Natural killer cell (primary cell): ENCODE measurements at regions of chr17 and their contacts with region 1.

Region 1: DNA sequence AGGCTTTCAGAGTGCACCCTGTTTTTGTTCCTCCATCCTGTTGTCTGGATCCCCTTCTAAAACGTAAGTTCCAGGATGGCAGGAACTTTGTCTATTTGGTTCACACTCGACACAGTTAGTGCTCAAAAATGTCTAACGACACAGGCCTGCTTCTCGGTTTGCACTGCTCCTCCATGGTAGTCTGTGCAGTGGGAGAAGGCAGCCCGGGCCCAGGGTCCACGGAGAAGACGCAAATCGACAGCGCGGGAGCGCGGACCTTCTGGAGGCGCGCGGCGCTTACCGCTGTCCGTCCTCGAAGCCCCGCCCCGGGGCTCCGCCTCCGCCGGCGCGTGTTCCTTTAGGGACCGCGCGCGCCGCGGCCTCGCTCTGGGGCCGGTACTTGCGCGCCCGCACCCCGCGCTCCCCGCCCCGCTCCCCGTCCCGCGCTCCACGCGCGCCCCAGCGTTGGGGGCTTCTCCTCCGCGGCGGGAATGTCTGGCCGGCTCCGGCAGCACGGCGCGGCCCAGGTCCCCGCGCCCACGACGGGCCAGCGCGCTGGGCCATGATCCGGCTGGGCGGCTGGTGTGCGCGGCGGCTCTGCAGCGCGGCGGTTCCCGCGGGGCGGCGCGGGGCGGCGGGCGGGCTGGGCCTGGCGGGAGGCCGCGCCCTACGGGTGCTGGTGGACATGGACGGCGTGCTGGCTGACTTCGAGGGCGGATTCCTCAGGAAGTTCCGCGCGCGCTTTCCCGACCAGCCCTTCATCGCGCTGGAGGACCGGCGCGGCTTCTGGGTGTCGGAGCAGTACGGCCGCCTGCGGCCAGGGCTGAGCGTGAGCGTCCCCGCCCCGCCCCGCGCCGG is at the start of gene NT5M:
- DNase-seq: peak; percentile 74 to 80
- ATAC-seq: peak; percentile 50 to 75 (median 66)
- H3K4me3 ChIP-seq: peak within 1 kb of the TSS; percentile 45
- H3K4me3 Mint-ChIP-seq: peak within 1 kb of the TSS; percentile 88
- H3K27ac ChIP-seq: peak within 1 kb of the TSS; percentile 65
- H3K27ac Mint-ChIP-seq: peak within 1 kb of the TSS; percentile 79 to 93
- H3K4me1 ChIP-seq: peaks cover 41% of the 10 kb centered on the region
- H3K4me1 Mint-ChIP-seq: peaks cover 31 to 36% of the 10 kb centered on the region in 2 donors
- H3K27me3 ChIP-seq: no peaks in the 10 kb centered on the region
- H3K27me3 Mint-ChIP-seq: peaks cover 5% of the 10 kb centered on the region in 2 donors
- CTCF ChIP-seq: no peak
- total RNA-seq, gene NT5M: 3.5 to 4.4 (median 4.1) TPM

Region 2: GRCh38 chr17:17206124-17206912 is 96.9 kb before region 1 on chr17 and contains the start of gene PLD6:
- intact Hi-C with region 1: loop called (anchors 5 kb)
- DNase-seq: peak; percentile 75 to 96
- ATAC-seq: peak; percentile 67 to 84 (median 75)
- H3K4me3 ChIP-seq: peak within 1 kb of the TSS; percentile 53
- H3K4me3 Mint-ChIP-seq: peak within 1 kb of the TSS; percentile 80
- H3K27ac ChIP-seq: peak within 1 kb of the TSS; percentile 56
- H3K27ac Mint-ChIP-seq: peak within 1 kb of the TSS; percentile 61 to 87
- H3K4me1 ChIP-seq: peaks cover 43% of the 10 kb centered on the region
- H3K4me1 Mint-ChIP-seq: peaks cover 22 to 41% of the 10 kb centered on the region in 2 donors
- H3K27me3 ChIP-seq: no peaks in the 10 kb centered on the region
- H3K27me3 Mint-ChIP-seq: no peaks in the 10 kb centered on the region
- CTCF ChIP-seq: no peak
- total RNA-seq, gene PLD6: 0.45 to 1.7 (median 0.84) TPM

Region 3: DNA sequence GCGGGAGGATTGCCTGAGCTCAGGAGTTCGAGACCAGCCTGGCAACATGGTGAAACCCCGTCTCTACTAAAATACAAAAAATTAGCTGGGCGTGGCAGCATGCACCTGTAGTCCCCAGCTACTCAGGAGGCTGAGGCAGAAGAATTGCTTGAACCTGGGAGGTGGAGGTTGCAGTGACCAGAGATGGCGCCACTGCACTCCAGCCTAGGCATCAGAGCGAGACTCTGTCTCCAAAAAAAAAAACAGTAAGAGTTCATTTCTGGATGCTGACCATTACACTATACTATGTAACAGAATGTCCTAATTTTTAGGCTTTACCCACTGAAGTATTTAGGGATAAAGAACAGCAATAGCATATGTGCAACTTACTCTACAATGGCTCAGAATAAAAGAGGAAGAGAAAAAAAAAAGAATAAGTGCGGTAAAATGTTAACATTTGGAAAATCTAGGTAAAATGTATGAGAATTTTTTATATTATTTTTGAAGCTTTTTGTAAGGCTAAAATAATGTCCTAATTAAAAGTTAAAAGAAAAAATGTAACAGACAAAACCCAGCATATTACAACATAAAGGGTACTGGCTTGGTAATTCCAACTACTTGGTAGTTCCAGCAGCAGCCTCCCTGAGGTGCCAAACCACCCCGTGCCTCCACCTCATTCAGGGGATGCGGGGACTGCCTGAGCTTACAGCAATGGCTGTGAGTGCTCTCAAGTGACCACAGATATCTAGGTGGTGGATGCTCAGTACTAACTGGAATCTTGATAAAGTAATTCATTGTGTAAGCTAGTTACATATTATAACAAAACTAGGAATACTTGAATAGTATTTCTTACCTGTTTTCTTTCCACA is 33.1 kb before region 1 on chr17:
- intact Hi-C with region 1: no loop called
- DNase-seq: peak in 1 of 2 donors; percentile 44
- ATAC-seq: no peak
- H3K4me3 ChIP-seq: no peak overlapping the region
- H3K4me3 Mint-ChIP-seq: no peak overlapping the region
- H3K27ac ChIP-seq: no peak overlapping the region
- H3K27ac Mint-ChIP-seq: peak overlapping the region in 1 of 2 donors; percentile 6
- H3K4me1 ChIP-seq: no peaks in the 10 kb centered on the region
- H3K4me1 Mint-ChIP-seq: no peaks in the 10 kb centered on the region
- H3K27me3 ChIP-seq: no peaks in the 10 kb centered on the region
- H3K27me3 Mint-ChIP-seq: no peaks in the 10 kb centered on the region
- CTCF ChIP-seq: peak; percentile 37

Region 4: DNA sequence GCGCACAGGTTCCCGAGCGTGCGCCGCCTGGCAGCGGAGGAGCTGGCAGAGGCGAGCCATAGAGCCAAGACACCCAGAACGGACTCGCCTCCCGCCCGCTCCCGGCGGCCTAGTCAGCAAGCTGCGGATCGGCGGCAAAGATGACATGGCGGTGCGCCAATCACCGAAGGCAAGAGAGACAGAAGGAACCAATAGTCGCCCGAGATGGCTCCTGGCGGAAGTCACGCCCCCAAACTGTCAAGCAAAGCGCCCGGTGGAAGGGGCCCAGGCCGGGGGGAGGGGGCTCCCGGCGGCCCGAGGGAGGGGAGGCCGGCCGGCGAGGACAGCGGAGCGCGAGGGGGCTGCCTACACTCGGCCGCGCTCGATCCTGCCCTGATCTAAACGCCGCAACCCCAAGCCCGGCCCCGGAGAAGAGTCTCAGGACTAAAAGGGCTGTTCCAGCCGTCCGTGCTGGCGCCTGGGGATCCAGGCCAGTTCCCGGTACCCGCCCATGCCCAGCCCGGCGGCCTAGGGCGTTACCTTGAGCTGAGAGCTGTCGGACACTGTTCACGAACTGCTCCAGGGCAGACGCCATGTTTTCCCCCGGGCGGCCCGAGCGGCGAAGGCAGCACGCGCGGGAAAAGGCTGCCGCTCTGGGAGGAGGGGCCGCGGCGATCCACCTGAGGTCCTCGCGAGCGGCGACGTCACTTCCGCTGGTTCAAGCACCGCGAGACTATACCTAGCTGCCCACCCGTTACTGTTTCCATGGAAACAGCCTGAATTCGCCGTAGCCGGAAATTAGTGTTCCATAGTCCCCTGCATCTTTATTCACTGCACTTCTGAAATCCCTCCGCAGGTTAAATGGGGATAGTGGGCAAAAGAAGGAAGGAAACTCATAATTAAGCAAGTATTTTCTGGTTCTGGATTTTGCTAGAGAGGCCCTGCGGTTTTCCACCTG is 22.3 kb before region 1 on chr17 and contains the start of gene COPS3:
- intact Hi-C with region 1: loop called (anchors 1 kb)
- DNase-seq: peak; percentile 96 to 99
- ATAC-seq: peak; percentile 87 to 96 (median 91)
- H3K4me3 ChIP-seq: peak within 1 kb of the TSS; percentile 84
- H3K4me3 Mint-ChIP-seq: peak within 1 kb of the TSS; percentile 93
- H3K27ac ChIP-seq: peak within 1 kb of the TSS; percentile 88
- H3K27ac Mint-ChIP-seq: peak within 1 kb of the TSS; percentile 91 to 94
- H3K4me1 ChIP-seq: peaks cover 25% of the 10 kb centered on the region
- H3K4me1 Mint-ChIP-seq: peaks cover 23 to 37% of the 10 kb centered on the region in 2 donors
- H3K27me3 ChIP-seq: no peaks in the 10 kb centered on the region
- H3K27me3 Mint-ChIP-seq: no peaks in the 10 kb centered on the region
- CTCF ChIP-seq: no peak
- total RNA-seq, gene COPS3: 101 to 115 (median 102) TPM

Region 5: DNA sequence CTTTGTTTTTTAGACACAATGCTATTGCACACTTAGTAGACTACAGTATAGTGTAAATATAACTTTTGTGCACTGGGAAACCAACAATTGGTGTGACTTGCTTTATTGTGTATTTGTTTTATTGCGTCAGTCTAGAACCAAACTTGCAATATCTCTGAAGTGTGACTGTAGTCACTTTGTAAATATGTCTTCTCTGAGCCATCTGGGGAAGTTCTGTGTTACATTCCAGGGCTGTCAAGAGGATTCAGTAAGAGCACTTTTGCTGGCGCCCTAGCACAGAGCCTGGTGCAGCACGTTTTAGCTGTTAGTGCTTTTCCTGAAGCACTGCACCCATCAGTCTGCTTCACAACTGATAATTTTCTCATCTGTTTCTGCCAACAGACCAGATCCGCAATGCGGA is 73.1 kb after region 1 on chr17:
- intact Hi-C with region 1: no loop called
- DNase-seq: no peak
- ATAC-seq: no peak
- H3K4me3 ChIP-seq: no peak overlapping the region
- H3K4me3 Mint-ChIP-seq: no peak overlapping the region
- H3K27ac ChIP-seq: no peak overlapping the region
- H3K27ac Mint-ChIP-seq: no peak overlapping the region
- H3K4me1 ChIP-seq: no peaks in the 10 kb centered on the region
- H3K4me1 Mint-ChIP-seq: peaks cover 0 to 5% of the 10 kb centered on the region in 2 donors
- H3K27me3 ChIP-seq: no peaks in the 10 kb centered on the region
- H3K27me3 Mint-ChIP-seq: no peaks in the 10 kb centered on the region
- CTCF ChIP-seq: no peak

Region 6: GRCh38 chr17:17663160-17664063 is 360.2 kb after region 1 on chr17:
- intact Hi-C with region 1: no loop called
- DNase-seq: peak; percentile 89 to 91
- ATAC-seq: peak; percentile 86 to 95 (median 89)
- H3K4me3 ChIP-seq: no peak overlapping the region
- H3K4me3 Mint-ChIP-seq: peak overlapping the region; percentile 3
- H3K27ac ChIP-seq: peak overlapping the region; percentile 65
- H3K27ac Mint-ChIP-seq: peak overlapping the region; percentile 82 to 83
- H3K4me1 ChIP-seq: peaks cover 22% of the 10 kb centered on the region
- H3K4me1 Mint-ChIP-seq: peaks cover 16 to 18% of the 10 kb centered on the region in 2 donors
- H3K27me3 ChIP-seq: no peaks in the 10 kb centered on the region
- H3K27me3 Mint-ChIP-seq: no peaks in the 10 kb centered on the region
- CTCF ChIP-seq: no peak